Psoas muscle (tissue), 8 donors: ENCODE measurements at regions of chr4 and their contacts with region 1.

Region 1: DNA sequence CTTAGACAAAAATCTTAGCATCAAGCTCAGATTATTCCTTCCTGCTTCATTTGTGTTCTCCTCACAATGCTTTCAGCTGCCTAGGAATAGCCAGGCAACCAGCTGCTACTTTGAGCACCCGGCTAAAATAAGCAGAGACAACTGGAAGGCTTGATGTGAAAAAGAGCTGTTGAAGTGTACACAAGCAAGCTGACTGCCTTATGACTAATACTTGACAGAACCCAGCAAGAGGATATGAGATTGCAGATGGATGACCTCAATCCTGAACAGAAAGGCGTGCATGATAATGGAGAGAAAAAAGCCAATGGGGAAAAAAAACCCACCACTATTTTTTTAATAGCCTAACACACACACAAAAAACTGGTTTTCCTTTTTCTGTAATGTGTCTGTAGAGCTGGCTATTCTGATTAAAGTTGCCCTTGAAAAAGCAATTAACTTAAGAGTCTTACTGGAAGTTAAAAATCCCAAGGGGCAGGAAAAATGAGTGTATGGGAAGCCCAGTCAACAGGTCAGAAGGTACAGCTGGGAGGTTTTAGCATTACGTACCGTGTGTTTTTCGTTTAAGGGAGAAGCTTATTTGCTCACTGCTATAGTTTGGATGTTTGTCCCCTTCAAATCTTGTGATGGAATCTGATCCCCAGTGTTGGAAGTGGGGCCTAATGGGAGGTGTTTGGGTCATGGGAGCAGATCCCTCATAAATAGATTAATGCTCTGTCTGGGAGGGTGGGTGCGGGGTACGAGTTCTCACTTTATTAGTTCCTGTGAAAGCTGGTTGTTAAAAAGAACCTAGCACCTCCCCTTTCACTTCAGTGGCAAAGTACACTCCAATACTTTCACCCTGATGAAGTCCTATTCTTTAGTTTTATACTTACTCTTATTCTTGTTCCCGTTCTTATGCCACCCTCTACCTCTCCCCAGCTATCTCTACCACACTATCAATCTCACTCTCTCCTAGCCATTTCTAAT is 37.1 kb upstream of the HERC6 start:
- DNase-seq: no peak
- ATAC-seq: peak; percentile 99 to 100 (median 100)
- H3K4me3 ChIP-seq: peak overlapping the region; percentile 30
- H3K27ac ChIP-seq: peak overlapping the region; percentile 96
- H3K4me1 ChIP-seq: peaks cover 19% of the 10 kb centered on the region
- H3K27me3 ChIP-seq: no peaks in the 10 kb centered on the region
- CTCF ChIP-seq: no peak

Region 2: DNA sequence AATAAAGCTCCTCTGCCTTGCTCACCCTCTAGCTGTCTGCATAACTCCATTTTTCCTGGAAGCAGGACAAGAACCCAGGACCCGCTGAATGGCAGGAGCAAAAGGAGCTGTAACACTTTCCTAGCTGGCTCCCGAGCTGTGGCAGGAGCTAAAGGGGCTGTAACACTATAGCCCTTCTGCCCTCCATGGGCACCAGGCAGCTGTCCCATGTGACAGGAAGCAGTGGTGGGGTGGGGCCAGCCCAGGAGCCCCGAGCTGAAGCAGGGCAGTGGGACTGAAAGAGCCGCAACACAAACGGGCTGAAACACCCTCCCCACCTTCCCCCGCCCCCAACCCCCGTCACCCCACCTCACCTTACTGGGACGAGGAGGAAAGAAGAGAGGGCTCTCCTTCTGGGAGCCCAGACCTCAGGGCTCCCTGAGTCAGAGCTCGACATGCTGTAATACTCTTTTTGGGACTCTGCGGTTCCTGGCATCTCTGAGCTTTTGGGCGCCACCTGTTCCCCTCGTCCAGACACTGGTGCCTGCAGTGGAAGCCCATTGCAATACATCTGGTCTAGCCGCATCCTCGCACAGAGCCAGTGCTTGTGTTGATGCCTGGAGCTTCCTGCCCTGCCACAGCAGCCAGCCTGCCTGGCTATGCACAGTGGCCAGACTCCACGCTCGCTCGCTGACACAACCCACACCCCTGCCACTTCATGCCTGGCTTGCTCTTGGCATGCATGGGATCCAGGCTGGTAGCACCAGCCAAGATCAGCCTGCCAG is 96.5 kb before region 1 on chr4:
- intact Hi-C with region 1: loop called in 1 of 2 experiments (anchors 5 kb)
- DNase-seq: peak; percentile 77 to 86
- ATAC-seq: peak; percentile 88 to 93 (median 90)
- H3K4me3 ChIP-seq: peak overlapping the region; percentile 59
- H3K27ac ChIP-seq: peak overlapping the region; percentile 93
- H3K4me1 ChIP-seq: peaks cover 38% of the 10 kb centered on the region
- H3K27me3 ChIP-seq: no peaks in the 10 kb centered on the region
- CTCF ChIP-seq: no peak

Region 3: DNA sequence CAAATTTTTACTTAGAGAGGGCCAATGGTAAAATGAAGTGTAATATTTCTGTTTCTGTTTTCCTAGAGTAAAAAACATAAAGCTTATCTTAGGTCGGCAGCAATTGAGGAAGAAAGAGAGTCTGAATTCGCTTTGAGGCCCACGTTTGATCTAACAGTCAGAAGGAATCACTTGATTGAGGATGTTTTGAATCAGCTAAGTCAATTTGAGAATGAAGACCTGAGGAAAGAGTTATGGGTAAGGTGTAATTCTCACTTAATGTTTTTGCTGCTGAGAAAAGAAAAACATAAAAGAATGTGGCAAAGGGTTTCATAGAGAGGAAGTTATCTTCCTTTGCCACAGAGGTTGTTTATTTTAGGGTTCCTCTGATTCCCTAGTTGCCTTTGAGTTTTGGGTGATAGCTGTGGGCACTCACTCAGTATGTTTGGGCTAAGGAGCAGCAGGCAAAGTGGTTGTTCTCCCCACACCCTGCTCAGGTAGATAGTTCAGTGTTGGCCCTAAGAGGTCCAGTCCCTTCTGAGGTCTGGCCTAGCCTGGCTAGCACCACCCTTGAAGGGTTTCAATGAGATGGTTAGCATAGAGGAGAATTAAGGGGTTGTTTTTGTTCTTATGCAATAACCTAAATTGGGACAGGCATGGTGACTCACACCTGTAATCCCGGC is 147.7 kb after region 1 on chr4:
- intact Hi-C with region 1: no loop called
- DNase-seq: no peak
- ATAC-seq: no peak
- H3K4me3 ChIP-seq: no peak overlapping the region
- H3K27ac ChIP-seq: no peak overlapping the region
- H3K4me1 ChIP-seq: no peaks in the 10 kb centered on the region
- H3K27me3 ChIP-seq: no peaks in the 10 kb centered on the region
- CTCF ChIP-seq: no peak